Activated CD4-positive, alpha-beta T cell treated with anti-CD3 and anti-CD28 coated beads, Interleukin-2, amount 10 ng/mL, durations not matched to agents 24 days and 14 days (primary cell): ENCODE measurements at regions of chr20 and their contacts with region 1.

Region 1: DNA sequence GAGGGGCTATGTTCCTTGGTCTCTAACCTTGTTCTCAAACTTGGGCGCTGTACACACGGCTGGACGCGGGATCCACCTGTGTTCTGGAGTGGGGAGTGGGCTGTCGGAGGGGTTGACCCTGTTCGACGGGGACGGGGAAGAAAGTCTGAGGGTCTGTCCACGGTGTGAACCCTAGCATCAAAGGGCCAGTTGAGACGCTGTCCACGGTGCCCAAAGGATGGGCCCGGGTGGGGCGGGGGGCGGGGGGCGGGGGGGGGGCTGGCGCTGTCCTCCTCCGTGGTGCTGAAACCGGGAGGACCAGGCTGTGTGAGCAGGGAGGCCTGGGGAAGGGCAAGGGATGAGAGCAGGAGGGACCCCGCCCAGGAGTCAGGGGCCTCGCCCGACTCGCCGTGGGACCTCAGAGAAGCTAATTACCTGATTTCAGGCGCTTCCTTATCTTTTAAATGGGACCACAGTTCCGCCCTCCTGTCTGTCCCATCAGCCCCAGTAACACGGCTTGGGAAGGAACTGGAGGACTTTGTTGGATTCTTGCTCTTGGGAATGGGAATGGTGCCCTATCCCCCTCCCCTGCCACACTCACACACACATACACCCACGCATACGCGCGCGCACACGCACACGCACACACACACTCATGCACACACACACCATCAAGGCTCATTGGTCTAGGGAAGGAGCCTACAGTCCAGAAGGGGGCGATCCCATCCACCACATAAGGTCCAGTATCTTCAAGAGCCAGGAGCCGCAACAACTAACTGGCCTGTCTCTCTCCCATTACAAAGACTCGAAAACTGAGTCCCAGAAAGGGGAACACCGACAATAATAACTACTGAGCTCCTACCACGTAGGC is 1.0 kb upstream of the VSTM2L start:
- DNase-seq: no peak
- H3K4me3 Mint-ChIP-seq: peak overlapping the region; percentile 11
- H3K27ac Mint-ChIP-seq: peak overlapping the region; percentile 54
- H3K4me1 Mint-ChIP-seq: peaks cover 10% of the 10 kb centered on the region
- H3K27me3 Mint-ChIP-seq: peaks cover 47% of the 10 kb centered on the region

Region 2: GRCh38 chr20:37990571-37991151 is 88.8 kb after region 1 on chr20:
- intact Hi-C with region 1: loop called (anchors 5 kb)
- DNase-seq: peak; percentile 90
- H3K4me3 Mint-ChIP-seq: peak overlapping the region; percentile 53
- H3K27ac Mint-ChIP-seq: peak overlapping the region; percentile 87
- H3K4me1 Mint-ChIP-seq: peaks cover 24% of the 10 kb centered on the region
- H3K27me3 Mint-ChIP-seq: no peaks in the 10 kb centered on the region